HepG2 (cell line): ENCODE measurements at regions of chr5 and their contacts with region 1.

Region 1: GRCh38 chr5:95989283-95990041 is 27.8 kb upstream of the ELL2 start:
- DNase-seq: no peak
- ATAC-seq: no peak
- H3K4me3 ChIP-seq: peak overlapping the region in 2 of 3 experiments; percentile 24 to 39; a peak in 3 of 6 replicates
- H3K27ac ChIP-seq: peak overlapping the region; percentile 91
- H3K4me1 ChIP-seq: peaks cover 84% of the 10 kb centered on the region
- H3K27me3 ChIP-seq: no peaks in the 10 kb centered on the region
- CTCF ChIP-seq: no peak
- EP300 ChIP-seq: peak in 1 of 2 experiments; percentile 33; a peak in 1 of 4 replicates
- POLR2A ChIP-seq: no peak
- RAD21 ChIP-seq: no peak

Region 2: DNA sequence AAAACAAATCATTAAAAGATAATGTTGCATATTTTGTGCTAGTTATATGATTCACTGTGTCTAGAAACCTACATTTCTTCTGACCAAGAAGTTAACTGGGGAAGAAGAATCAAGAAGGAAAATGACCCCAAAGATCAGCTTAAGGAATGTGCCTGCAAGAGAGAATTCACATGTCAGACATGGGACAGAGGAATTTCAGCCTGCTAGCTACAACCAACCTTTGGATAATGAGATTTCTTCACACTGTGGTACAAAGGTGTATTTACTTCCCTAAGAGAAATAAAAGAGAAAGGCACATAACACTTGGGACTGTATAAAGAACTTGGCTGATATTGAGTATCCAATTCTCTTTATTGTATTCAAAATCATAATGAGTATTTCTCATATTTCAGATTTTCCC is 11.8 kb after region 1 on chr5:
- CTCF ChIA-PET with region 1: no interaction called
- POLR2A ChIA-PET with region 1: interaction called, 15 read pairs
- in situ Hi-C with region 1: no loop called
- intact Hi-C with region 1: loop called (anchors 1 kb)
- DNase-seq: peak; percentile 85
- ATAC-seq: peak; percentile 94
- H3K4me3 ChIP-seq: no peak overlapping the region
- H3K27ac ChIP-seq: peak overlapping the region; percentile 54
- H3K4me1 ChIP-seq: peaks cover 61% of the 10 kb centered on the region
- H3K27me3 ChIP-seq: no peaks in the 10 kb centered on the region
- CTCF ChIP-seq: no peak
- EP300 ChIP-seq: peak in 1 of 2 experiments; percentile 84; a peak in 2 of 4 replicates
- POLR2A ChIP-seq: no peak
- RAD21 ChIP-seq: no peak